Aorta (tissue), 5 donors: ENCODE measurements at regions of chr11 and their contacts with region 1.

Region 1: GRCh38 chr11:11895672-11896071 is 53.9 kb downstream of the USP47 start:
- DNase-seq: no peak
- ATAC-seq: no peak
- H3K4me3 ChIP-seq: no peak overlapping the region
- H3K27ac ChIP-seq: no peak overlapping the region
- H3K4me1 ChIP-seq: no peaks in the 10 kb centered on the region
- H3K27me3 ChIP-seq: no peaks in the 10 kb centered on the region

Region 2: GRCh38 chr11:11798586-11799438 is 96.9 kb before region 1 on chr11:
- intact Hi-C with region 1: loop called in 1 of 2 experiments (anchors 5 kb)
- DNase-seq: peak; percentile 78 to 95
- ATAC-seq: peak; percentile 91
- H3K4me3 ChIP-seq: no peak overlapping the region
- H3K27ac ChIP-seq: no peak overlapping the region
- H3K4me1 ChIP-seq: no peaks in the 10 kb centered on the region
- H3K27me3 ChIP-seq: no peaks in the 10 kb centered on the region

Region 3: GRCh38 chr11:11850668-11851067 is 45.0 kb before region 1 on chr11:
- intact Hi-C with region 1: loop called in 1 of 2 experiments (anchors 5 kb)
- DNase-seq: no peak
- ATAC-seq: no peak
- H3K4me3 ChIP-seq: no peak overlapping the region
- H3K27ac ChIP-seq: peak overlapping the region in 1 of 2 donors; percentile 57
- H3K4me1 ChIP-seq: peaks cover 5 to 8% of the 10 kb centered on the region in 2 donors
- H3K27me3 ChIP-seq: no peaks in the 10 kb centered on the region

Region 4: DNA sequence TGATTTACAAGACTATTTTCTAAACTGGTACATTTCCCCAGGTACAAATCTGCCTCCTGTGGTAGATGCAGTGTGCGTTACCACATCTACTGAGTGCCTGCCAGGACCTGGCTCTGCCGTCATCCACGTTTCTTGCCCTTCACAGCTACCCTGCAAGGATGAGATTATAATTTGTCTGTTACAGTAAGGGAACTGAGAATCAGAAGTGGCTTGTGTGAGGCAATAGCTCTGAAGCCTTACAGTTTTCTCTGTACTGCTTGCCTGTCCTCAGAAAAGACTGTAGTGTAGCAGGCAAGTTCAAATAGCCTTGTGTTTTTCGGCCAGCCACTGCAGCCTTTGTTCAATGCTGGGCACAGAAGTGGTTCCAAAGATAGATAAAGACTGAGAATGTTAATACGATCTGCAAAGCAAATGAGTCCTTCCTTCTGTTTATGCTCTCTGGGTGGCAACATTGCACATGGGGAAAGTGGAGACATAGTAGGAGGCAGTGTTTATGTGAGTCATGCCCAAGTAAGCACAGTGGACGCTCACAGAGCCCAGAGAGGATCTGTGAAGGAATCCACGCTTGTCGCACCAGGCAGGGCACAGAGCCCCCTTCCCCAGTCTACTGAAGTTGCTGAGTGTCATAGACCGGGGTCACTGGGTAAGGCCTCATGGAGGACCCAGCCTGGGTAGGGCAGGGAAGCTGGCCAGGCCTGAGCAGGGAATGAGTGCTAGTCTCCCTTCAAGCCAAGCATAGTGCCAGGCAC is 263.9 kb after region 1 on chr11:
- intact Hi-C with region 1: no loop called
- DNase-seq: peak in 1 of 2 donors; percentile 62
- ATAC-seq: no peak
- H3K4me3 ChIP-seq: no peak overlapping the region
- H3K27ac ChIP-seq: peak overlapping the region; percentile 83 to 84
- H3K4me1 ChIP-seq: peaks cover 7 to 35% of the 10 kb centered on the region in 2 donors
- H3K27me3 ChIP-seq: no peaks in the 10 kb centered on the region